Activated CD8-positive, alpha-beta T cell treated with anti-CD3 and anti-CD28 coated beads for 36 hours (primary cell): ENCODE measurements at regions of chr18 and their contacts with region 1.

Region 1: DNA sequence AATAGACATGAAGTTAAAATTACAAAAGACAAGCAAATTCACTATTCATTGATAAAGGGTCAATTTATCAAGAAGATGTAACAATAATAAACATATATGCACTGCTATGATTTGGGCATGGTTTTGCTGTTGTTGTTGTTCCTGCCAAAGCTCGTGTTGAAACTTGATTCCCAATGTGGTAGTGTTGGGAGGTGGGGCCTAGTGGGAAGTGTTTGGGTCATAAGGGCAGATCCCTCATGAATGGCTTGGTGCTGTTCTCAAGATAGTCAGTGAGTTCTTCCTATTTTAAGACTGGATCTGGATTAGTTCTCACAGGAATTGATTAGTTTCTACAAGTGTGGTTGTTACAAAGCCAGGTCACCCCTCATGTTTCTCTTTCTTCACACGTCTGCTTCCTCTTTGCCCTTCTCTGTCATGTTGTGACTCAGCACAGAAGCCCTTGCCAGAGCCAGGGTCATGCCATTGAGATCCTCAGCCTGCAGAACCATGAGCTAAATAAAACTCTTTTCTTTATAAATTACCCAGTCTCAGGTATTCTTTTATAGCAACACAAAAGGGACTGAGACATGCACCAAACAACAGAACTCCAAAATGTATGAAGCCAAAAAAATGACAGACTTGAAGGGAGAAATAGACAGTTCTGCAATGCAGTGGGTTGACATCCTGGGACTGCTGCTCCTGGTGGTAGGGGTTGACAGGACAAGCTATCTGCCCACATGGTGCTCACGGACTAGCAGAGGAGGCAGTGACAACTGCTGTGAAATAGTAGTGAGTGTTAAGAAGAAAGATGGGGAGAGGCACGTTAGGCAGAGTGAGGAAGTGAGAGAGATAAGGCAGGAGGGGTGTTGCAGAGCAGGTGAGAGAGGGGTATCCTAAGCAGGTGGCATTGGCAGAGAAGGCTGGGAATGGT is 18.6 kb upstream of the SKA1 start:
- DNase-seq: peak; percentile 36
- ATAC-seq: peak; percentile 77
- H3K4me3 Mint-ChIP-seq: no peak overlapping the region
- H3K27ac Mint-ChIP-seq: no peak overlapping the region
- H3K4me1 Mint-ChIP-seq: peaks cover 9% of the 10 kb centered on the region
- H3K27me3 Mint-ChIP-seq: peaks cover 18% of the 10 kb centered on the region
- CTCF ChIP-seq: peak; percentile 30

Region 2: GRCh38 chr18:50203801-50204604 is 152.3 kb before region 1 on chr18:
- CTCF ChIA-PET with region 1: interaction called, 19 read pairs
- POLR2A ChIA-PET with region 1: no interaction called
- intact Hi-C with region 1: no loop called
- DNase-seq: peak; percentile 31
- ATAC-seq: no peak
- H3K4me3 Mint-ChIP-seq: no peak overlapping the region
- H3K27ac Mint-ChIP-seq: no peak overlapping the region
- H3K4me1 Mint-ChIP-seq: peaks cover 9% of the 10 kb centered on the region
- H3K27me3 Mint-ChIP-seq: peaks cover 50% of the 10 kb centered on the region
- CTCF ChIP-seq: peak; percentile 55

Region 3: DNA sequence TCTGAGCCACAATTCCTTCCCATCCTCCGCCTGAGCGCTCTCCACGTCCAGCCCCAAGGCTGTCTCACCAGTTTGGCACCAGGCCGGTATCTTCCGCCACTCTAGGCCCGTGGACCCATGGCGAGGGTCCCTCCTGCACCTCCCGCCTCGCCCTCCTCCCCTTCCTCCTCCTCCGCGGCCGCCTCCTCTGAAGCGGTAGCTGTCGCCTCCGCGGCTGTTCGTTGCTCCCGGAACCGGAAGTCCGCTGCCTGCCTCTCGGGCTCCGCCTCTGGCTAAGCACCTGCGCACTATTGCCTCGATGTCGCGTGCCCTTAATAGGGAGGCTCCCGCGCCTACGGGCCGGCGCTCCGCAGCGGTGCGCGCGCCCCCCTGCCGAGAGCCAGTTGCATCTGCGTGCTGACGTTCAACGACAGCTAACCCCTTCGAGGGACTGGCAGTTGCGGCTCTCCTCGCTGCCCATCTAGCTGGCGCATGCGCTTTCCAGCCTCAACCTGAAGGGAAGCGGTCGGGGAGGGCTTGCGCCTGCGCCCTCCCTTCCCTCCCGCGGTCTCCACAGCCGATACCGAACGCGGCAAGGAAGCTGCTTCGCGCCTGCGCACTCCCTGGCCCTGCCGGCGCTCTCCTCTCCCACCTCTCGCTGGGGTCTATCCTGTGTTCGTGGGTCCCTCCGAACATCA is 74.9 kb before region 1 on chr18 and contains the start of gene MBD1:
- CTCF ChIA-PET with region 1: interaction called, 12 read pairs
- POLR2A ChIA-PET with region 1: no interaction called
- intact Hi-C with region 1: no loop called
- DNase-seq: peak; percentile 97
- ATAC-seq: peak; percentile 92
- H3K4me3 Mint-ChIP-seq: peak within 1 kb of the TSS; percentile 91
- H3K27ac Mint-ChIP-seq: peak within 1 kb of the TSS; percentile 96
- H3K4me1 Mint-ChIP-seq: peaks cover 47% of the 10 kb centered on the region
- H3K27me3 Mint-ChIP-seq: no peaks in the 10 kb centered on the region
- CTCF ChIP-seq: no peak
- total RNA-seq, gene MBD1: 67.4 to 69.0 TPM

Region 4: GRCh38 chr18:50307738-50308470 is 48.4 kb before region 1 on chr18:
- CTCF ChIA-PET with region 1: interaction called, 11 read pairs
- POLR2A ChIA-PET with region 1: interaction called, 4 read pairs
- intact Hi-C with region 1: no loop called
- DNase-seq: peak; percentile 97
- ATAC-seq: peak; percentile 99
- H3K4me3 Mint-ChIP-seq: peak overlapping the region; percentile 83
- H3K27ac Mint-ChIP-seq: peak overlapping the region; percentile 70
- H3K4me1 Mint-ChIP-seq: peaks cover 16% of the 10 kb centered on the region
- H3K27me3 Mint-ChIP-seq: peaks cover 4% of the 10 kb centered on the region
- CTCF ChIP-seq: no peak

Region 5: GRCh38 chr18:50341443-50341842 is 14.8 kb before region 1 on chr18:
- CTCF ChIA-PET with region 1: interaction called, 11 read pairs
- POLR2A ChIA-PET with region 1: no interaction called
- intact Hi-C with region 1: no loop called
- DNase-seq: no peak
- ATAC-seq: no peak
- H3K4me3 Mint-ChIP-seq: no peak overlapping the region
- H3K27ac Mint-ChIP-seq: no peak overlapping the region
- H3K4me1 Mint-ChIP-seq: no peaks in the 10 kb centered on the region
- H3K27me3 Mint-ChIP-seq: no peaks in the 10 kb centered on the region
- CTCF ChIP-seq: no peak

Region 6: GRCh38 chr18:50559752-50560680 is 203.7 kb after region 1 on chr18 and contains the start of gene MAPK4:
- CTCF ChIA-PET with region 1: no interaction called
- POLR2A ChIA-PET with region 1: no interaction called
- intact Hi-C with region 1: no loop called
- DNase-seq: peak; percentile 15
- ATAC-seq: peak; percentile 84
- H3K4me3 Mint-ChIP-seq: peak within 1 kb of the TSS; percentile 16
- H3K27ac Mint-ChIP-seq: no peak within 1 kb of the TSS
- H3K4me1 Mint-ChIP-seq: peaks cover 3% of the 10 kb centered on the region
- H3K27me3 Mint-ChIP-seq: peaks cover 58% of the 10 kb centered on the region
- CTCF ChIP-seq: no peak
- total RNA-seq, gene MAPK4: not detected